Dendritic cell treated with granulocyte-macrophage colony-stimulating factor and Interleukin-4, amounts not matched to agents 40 ng/mL and 50 ng/mL, for 4 days (primary cell): ENCODE measurements at regions of chr1 and their contacts with region 1.

Region 1: DNA sequence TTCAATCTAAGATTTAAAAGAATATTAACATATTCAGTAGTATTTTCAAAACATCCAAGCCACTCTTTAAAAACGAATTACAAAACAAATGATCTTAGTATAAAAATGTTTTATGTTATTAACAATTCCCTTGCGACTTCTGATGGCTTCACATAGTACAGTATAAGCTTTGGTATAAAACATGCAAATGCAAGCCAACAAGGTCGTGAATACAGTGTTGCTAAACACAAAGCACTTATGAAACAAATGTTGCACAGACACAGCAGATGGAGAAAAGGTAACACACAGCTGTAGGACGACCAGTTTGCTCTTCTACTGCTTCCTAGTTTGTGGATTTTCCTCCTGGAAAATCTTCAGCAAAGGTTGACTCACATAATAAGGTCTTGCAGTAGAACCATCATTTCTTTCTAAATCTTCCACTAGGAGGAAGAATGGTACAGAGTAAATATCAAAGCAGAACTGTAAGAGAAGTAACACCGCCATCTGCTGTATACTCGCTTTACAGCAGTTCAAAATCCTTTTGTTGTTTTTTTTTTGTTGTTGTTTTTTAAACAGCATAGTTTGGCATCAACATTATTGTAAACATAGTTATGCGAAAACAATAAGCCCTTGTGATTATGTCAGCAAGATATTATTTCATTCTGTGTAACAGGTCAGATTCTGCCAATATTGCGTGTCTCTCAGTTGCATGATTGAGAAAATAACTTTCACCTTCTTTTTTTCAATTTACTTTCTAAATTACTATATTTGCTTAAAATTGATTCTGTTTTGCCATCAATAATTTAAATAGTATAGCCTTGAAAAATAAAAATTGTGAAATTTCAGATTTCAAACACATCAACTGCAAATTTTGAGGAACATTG is 69.5 kb downstream of the LHX8 start:
- H3K4me3 Mint-ChIP-seq: no peak overlapping the region
- H3K27ac Mint-ChIP-seq: no peak overlapping the region
- H3K4me1 Mint-ChIP-seq: no peaks in the 10 kb centered on the region
- H3K27me3 Mint-ChIP-seq: peaks cover 3% of the 10 kb centered on the region

Region 2: DNA sequence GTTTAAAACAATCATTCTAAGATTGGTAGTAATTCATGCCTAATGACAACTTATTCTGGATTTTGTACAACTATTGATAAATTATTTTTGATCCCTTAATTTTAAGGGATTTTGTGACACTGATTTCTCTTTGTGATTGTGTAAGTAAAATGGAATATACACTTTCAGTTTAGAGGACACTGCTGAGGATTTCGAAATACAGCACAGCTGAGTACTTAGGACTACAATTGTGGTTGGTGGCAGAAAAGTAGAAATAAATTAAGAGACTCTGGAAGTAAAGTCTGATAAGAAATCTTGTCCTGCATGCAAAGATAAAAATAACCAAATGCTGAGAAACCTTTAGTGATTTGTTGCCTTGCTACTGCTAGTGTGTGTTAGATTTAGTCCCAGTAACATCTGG is 430.7 kb before region 1 on chr1:
- intact Hi-C with region 1: loop called (anchors 1 kb)
- H3K4me3 Mint-ChIP-seq: no peak overlapping the region
- H3K27ac Mint-ChIP-seq: no peak overlapping the region
- H3K4me1 Mint-ChIP-seq: no peaks in the 10 kb centered on the region
- H3K27me3 Mint-ChIP-seq: no peaks in the 10 kb centered on the region

Region 3: GRCh38 chr1:75074831-75075395 is 128.7 kb before region 1 on chr1:
- intact Hi-C with region 1: no loop called
- H3K4me3 Mint-ChIP-seq: no peak overlapping the region
- H3K27ac Mint-ChIP-seq: no peak overlapping the region
- H3K4me1 Mint-ChIP-seq: no peaks in the 10 kb centered on the region
- H3K27me3 Mint-ChIP-seq: no peaks in the 10 kb centered on the region

Region 4: DNA sequence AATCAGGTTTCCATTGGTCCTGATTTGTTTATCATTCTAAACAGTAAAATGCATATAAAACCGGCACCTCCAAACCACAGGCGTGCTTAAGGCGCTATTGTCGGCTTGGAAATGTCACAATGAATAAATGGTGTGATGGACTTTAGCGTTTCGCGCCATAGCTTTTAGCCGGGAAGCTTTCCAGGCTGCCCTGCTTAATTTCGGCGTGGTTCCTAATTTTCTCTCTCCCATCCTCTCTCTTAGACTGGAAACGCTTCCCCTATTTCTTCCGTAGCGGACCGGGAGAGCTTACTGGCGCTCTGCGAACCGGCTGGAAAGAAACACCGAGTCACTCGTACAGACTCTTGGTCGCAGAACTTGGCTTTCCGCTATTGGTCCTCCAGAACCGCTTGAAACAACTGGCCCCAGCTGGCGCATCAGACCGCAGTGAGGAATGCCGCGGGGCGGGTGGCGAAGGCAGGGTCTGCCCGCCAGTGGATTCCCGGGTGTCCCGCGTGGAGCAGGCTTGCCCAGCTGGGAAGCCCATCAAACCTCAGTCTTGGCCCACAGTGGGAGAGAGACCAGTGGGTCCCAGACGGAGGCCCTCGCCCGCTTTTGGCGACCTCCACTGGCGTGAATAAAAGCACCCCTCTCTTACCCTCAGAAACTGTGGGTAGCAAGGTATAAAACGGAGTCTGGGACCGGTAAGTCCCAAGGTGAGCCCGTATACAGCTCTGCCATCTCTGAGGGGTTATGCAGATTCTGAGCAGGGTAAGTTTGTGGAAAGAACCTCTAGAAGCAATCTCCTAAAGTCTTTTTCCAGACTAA is 73.5 kb before region 1 on chr1:
- intact Hi-C with region 1: no loop called
- H3K4me3 Mint-ChIP-seq: no peak overlapping the region
- H3K27ac Mint-ChIP-seq: no peak overlapping the region
- H3K4me1 Mint-ChIP-seq: peaks cover 7% of the 10 kb centered on the region
- H3K27me3 Mint-ChIP-seq: peaks cover 94% of the 10 kb centered on the region

Region 5: DNA sequence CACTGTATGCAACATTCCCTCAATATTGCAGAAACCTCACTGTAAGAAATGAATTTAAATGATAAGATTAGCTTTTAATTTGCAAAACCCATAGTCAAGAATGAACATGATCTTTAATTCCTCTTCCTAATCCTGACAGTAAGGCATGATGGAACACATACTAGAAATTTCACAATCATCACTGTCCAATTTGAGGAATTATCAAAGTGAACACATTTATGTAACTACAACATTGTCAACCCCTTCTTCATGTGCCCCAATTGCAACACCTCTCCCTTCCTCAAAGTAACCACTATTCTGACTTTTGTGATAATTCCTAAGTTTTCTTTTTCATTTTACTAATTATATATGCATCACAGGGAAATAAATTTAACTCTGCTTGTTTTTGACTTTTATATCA is 33.7 kb after region 1 on chr1:
- intact Hi-C with region 1: no loop called
- H3K4me3 Mint-ChIP-seq: no peak overlapping the region
- H3K27ac Mint-ChIP-seq: no peak overlapping the region
- H3K4me1 Mint-ChIP-seq: no peaks in the 10 kb centered on the region
- H3K27me3 Mint-ChIP-seq: no peaks in the 10 kb centered on the region